Activated CD4-positive, alpha-beta memory T cell treated with anti-CD3 and anti-CD28 coated beads, Interleukin-2, amount 10 ng/mL, durations not matched to agents 7 days and 5 days (primary cell): ENCODE measurements at regions of chr2 and their contacts with region 1.

Region 1: GRCh38 chr2:68925295-68925896 is 27.3 kb downstream of the GKN2 start:
- DNase-seq: peak; percentile 64
- H3K4me3 Mint-ChIP-seq: no peak overlapping the region
- H3K27ac Mint-ChIP-seq: no peak overlapping the region
- H3K4me1 Mint-ChIP-seq: peaks cover 9% of the 10 kb centered on the region
- H3K27me3 Mint-ChIP-seq: peaks cover 24% of the 10 kb centered on the region

Region 2: DNA sequence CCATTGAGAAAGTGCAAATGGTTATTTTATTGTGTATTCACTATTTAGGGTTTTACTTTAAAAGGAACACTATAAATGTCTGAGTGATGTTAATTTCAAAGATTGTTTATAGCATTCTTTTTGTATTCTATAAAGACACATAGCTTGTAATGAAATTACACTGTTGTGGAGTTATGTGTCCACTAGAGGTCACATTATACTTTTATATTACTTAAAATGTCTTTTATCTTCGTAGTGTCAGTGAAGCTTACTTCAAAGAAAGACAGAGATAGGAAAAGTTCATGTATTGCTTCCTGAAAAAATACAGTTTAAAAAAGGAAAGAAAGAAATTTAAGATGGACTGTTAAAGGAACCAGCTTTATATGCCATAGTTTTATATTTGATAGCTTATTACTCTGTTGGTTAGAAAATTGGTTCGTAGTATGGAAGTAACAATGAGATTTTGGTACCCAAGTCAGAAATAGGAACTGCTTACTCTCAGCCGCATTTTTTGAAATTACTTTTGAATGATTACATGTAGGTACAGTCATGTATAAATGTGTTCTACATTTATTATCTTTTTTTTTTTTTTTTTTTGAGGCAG is 437.5 kb before region 1 on chr2:
- CTCF ChIA-PET with region 1: interaction called, 32 read pairs
- POLR2A ChIA-PET with region 1: no interaction called
- DNase-seq: no peak
- H3K4me3 Mint-ChIP-seq: no peak overlapping the region
- H3K27ac Mint-ChIP-seq: no peak overlapping the region
- H3K4me1 Mint-ChIP-seq: peaks cover 4% of the 10 kb centered on the region
- H3K27me3 Mint-ChIP-seq: no peaks in the 10 kb centered on the region

Region 3: DNA sequence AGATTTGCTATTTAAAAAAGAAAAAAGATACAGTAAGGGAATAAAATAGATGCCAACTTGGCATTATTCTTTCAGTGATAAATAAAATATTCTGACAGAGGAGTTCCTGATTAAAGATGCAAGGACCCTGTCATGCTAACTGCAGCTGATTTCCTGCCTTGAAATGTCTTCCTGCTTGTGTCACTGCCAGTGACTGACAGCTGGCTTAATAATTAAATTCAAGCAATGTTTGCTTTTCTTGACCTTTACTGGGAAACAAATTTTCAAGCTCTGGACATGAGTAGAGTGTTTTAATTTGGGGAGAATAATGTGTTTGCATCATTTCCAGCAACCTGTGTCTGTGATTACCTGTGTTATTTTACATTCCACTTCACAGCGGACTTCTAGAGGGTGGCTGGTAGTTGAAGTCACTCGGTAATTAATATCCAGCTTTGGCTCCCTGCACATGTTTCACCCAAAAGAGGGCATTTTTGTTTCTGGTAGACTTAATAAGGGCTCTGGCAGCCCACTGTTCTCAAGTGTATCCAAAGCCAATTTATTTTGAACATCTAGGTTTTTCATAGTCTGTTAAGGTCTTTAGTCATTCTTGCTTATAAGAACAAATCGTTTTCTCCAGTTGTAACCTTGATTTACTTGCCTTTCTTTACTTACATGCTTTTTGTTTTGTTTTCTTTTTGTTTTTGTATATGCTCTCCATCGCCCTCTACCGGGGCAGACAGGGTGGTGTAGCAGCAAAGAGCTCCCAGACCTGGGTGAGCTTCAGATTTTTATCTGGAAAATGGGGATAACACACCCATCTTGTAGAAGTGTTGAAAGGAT is 330.5 kb before region 1 on chr2:
- CTCF ChIA-PET with region 1: interaction called, 19 read pairs
- POLR2A ChIA-PET with region 1: no interaction called
- DNase-seq: peak; percentile 63
- H3K4me3 Mint-ChIP-seq: peak overlapping the region; percentile 34
- H3K27ac Mint-ChIP-seq: no peak overlapping the region
- H3K4me1 Mint-ChIP-seq: peaks cover 11% of the 10 kb centered on the region
- H3K27me3 Mint-ChIP-seq: peaks cover 12% of the 10 kb centered on the region

Region 4: DNA sequence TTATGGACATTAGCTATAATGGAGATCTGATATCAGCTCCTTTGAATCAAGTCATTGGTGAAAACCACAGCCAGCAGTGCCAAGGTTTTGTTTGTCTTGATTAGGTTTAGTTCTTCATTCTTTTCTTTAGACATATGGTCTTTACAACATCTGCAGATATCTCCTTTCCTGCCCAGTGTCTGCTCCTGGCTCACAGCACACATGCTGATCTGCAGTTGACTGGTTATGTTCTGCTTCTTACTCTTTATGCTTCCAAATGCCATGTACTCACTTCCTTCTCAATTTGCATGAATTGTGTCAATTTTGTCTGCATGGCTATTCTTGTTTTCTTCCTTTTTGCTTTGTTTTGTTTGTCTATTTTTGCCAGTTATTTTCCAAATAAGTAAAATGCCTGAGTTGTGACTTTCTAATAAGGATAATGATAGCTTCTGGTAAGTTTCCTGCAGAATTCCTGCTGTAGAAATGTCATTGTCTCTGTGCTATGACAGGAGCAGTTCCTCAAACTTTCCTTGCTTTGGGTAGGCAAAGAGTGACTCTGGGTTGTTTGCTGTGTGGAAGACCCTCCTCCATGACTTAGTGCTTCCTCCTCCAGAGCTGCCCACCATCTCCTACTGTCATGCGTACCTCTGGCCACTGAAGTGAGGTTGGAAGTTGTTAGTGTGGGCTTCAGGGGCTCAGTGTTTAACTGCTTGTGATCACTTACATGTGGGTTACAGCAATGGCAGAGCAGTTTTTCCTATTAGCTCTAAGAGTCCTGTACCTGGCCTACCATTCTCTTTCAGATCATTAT is 182.6 kb before region 1 on chr2:
- CTCF ChIA-PET with region 1: interaction called, 14 read pairs
- POLR2A ChIA-PET with region 1: no interaction called
- DNase-seq: peak; percentile 18
- H3K4me3 Mint-ChIP-seq: peak overlapping the region; percentile 52
- H3K27ac Mint-ChIP-seq: peak overlapping the region; percentile 68
- H3K4me1 Mint-ChIP-seq: peaks cover 92% of the 10 kb centered on the region
- H3K27me3 Mint-ChIP-seq: no peaks in the 10 kb centered on the region

Region 5: GRCh38 chr2:68837164-68837860 is 88.1 kb before region 1 on chr2:
- CTCF ChIA-PET with region 1: interaction called, 30 read pairs
- POLR2A ChIA-PET with region 1: no interaction called
- DNase-seq: peak; percentile 67
- H3K4me3 Mint-ChIP-seq: no peak overlapping the region
- H3K27ac Mint-ChIP-seq: peak overlapping the region; percentile 28
- H3K4me1 Mint-ChIP-seq: peaks cover 43% of the 10 kb centered on the region
- H3K27me3 Mint-ChIP-seq: peaks cover 4% of the 10 kb centered on the region

Region 6: DNA sequence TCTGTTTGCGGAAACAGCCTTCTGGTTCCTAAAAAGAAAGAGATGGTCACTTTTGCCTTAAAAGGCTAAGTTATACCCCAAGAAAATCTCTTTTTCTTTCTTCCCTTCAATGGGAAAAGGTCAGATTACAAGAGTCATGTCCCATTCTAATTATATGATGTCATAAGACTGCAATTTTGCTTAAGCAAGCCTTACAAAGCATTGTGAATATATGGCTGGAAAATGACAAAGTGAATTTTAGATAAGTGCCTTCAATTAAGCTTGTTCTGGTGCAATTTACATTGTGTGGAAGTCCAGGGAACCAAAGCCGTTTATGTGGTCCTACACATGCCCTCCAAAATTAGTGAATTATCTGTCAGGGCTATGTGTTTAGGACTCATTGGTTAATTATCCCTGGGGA is 46.6 kb before region 1 on chr2:
- CTCF ChIA-PET with region 1: no interaction called
- POLR2A ChIA-PET with region 1: no interaction called
- DNase-seq: no peak
- H3K4me3 Mint-ChIP-seq: no peak overlapping the region
- H3K27ac Mint-ChIP-seq: no peak overlapping the region
- H3K4me1 Mint-ChIP-seq: no peaks in the 10 kb centered on the region
- H3K27me3 Mint-ChIP-seq: peaks cover 39% of the 10 kb centered on the region

Region 7: GRCh38 chr2:68909793-68910674 is 15.4 kb before region 1 on chr2:
- CTCF ChIA-PET with region 1: interaction called, 38 read pairs
- POLR2A ChIA-PET with region 1: interaction called, 15 read pairs
- DNase-seq: peak; percentile 80
- H3K4me3 Mint-ChIP-seq: no peak overlapping the region
- H3K27ac Mint-ChIP-seq: peak overlapping the region; percentile 69
- H3K4me1 Mint-ChIP-seq: peaks cover 43% of the 10 kb centered on the region
- H3K27me3 Mint-ChIP-seq: no peaks in the 10 kb centered on the region

Region 8: GRCh38 chr2:68943581-68944568 is 18.5 kb after region 1 on chr2:
- CTCF ChIA-PET with region 1: interaction called, 11 read pairs
- POLR2A ChIA-PET with region 1: no interaction called
- DNase-seq: peak; percentile 50
- H3K4me3 Mint-ChIP-seq: no peak overlapping the region
- H3K27ac Mint-ChIP-seq: no peak overlapping the region
- H3K4me1 Mint-ChIP-seq: peaks cover 4% of the 10 kb centered on the region
- H3K27me3 Mint-ChIP-seq: peaks cover 64% of the 10 kb centered on the region